BJ (cell line): ENCODE measurements at regions of chr1 and their contacts with region 1.

Region 1: GRCh38 chr1:115595279-115596079 is 46.3 kb upstream of the VANGL1 start:
- DNase-seq: peak; percentile 63
- H3K4me3 ChIP-seq: no peak overlapping the region
- H3K27me3 ChIP-seq: no peaks in the 10 kb centered on the region
- CTCF ChIP-seq: peak; percentile 96

Region 2: GRCh38 chr1:115506926-115507589 is 88.4 kb before region 1 on chr1:
- CTCF ChIA-PET with region 1: interaction called, 19 read pairs
- POLR2A ChIA-PET with region 1: no interaction called
- DNase-seq: no peak
- H3K4me3 ChIP-seq: no peak overlapping the region
- H3K27me3 ChIP-seq: no peaks in the 10 kb centered on the region
- CTCF ChIP-seq: peak; percentile 71

Region 3: DNA sequence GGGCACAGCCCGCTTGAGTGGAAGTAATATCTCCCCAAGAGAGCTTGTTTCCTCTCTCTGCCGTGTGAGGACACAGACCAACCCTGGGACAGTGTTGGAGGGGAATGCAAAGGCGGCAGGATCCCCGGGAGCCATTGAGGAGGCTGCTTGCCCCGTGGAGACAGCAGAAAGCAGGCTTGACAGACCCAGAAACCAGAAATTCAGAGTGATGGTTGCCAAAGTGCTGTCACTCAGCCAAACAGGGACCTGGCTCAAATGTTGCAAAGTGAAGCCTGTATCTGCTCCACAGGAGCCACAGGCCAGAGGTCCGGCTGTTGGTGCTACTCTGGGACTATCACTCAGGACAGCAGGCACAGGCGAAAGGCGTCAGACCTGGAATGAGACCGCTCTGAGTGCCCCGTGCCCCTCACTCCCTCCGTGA is 50.3 kb before region 1 on chr1:
- CTCF ChIA-PET with region 1: interaction called, 15 read pairs
- POLR2A ChIA-PET with region 1: no interaction called
- DNase-seq: no peak
- H3K4me3 ChIP-seq: no peak overlapping the region
- H3K27me3 ChIP-seq: no peaks in the 10 kb centered on the region
- CTCF ChIP-seq: no peak

Region 4: GRCh38 chr1:115717541-115717940 is 122.1 kb after region 1 on chr1:
- CTCF ChIA-PET with region 1: no interaction called
- POLR2A ChIA-PET with region 1: no interaction called
- DNase-seq: no peak
- H3K4me3 ChIP-seq: no peak overlapping the region
- H3K27me3 ChIP-seq: peaks cover 9% of the 10 kb centered on the region; the same call in 1 of the 2 replicates
- CTCF ChIP-seq: peak; percentile 53

Region 5: DNA sequence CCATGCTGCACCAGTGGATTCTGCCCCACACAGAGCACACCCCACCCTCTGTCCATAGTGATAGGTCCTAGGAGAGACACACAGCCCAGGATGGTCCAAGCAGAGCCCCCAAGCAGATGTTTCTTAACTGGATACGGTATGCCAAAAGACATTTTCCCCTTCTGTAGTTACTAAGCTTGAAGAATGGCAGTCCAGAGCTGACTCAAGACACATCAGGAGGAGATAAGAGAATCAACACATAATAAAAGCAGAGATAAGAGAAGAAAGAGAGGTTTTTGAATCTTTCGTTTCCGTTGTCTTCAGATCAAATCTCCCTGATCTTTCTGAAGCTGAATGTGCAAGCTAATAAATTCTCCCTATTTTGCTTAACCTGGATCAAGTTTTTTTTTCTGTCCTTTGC is 194.9 kb after region 1 on chr1:
- CTCF ChIA-PET with region 1: no interaction called
- POLR2A ChIA-PET with region 1: no interaction called
- DNase-seq: no peak
- H3K4me3 ChIP-seq: no peak overlapping the region
- H3K27me3 ChIP-seq: peaks cover 3% of the 10 kb centered on the region
- CTCF ChIP-seq: no peak